PC-9 (cell line): ENCODE measurements at regions of chrX and their contacts with region 1.

Region 1: DNA sequence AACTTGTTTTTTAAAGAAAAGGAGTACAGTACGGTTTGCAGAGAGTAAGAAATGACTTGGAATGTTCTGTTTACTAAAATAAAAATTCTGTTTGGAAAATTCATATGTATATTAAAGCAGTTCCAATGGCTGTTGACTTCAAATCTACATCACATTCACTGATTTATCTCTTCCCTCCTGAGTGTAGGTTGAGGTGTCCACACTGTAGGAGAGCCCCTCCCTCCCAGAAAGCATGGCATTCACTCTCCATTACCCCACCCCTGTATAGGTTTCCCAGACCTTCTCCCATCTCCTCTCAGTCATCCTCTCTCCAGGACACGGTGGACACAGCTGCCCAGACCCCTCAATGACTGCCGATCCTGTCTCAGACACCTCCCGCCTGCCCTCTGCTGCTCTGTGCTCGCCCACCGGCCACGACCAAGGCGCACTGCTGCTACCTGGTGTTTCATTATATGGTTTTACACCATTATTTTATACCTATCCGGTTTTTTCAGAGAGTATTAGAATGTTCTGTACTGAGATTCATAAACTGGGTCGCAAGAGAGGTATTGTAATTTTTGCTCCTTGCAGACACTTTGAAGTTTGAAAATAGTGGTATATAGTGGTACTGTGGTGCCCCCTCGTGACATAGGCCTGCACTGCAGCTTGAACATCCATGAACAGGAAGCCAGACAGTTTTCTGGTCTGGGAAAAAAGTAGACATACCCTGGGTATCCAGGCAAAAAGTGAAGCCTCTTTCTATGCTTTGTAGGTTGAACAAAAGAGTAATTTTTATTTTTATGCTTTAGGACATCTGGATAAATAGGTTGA is 38.8 kb upstream of the BEX4 start:
- DNase-seq: peak in 1 of 2 experiments; percentile 50
- H3K4me3 ChIP-seq: no peak overlapping the region
- H3K27ac ChIP-seq: no peak overlapping the region
- H3K4me1 ChIP-seq: no peaks in the 10 kb centered on the region
- H3K27me3 ChIP-seq: no peaks in the 10 kb centered on the region
- CTCF ChIP-seq: peak; percentile 74

Region 2: DNA sequence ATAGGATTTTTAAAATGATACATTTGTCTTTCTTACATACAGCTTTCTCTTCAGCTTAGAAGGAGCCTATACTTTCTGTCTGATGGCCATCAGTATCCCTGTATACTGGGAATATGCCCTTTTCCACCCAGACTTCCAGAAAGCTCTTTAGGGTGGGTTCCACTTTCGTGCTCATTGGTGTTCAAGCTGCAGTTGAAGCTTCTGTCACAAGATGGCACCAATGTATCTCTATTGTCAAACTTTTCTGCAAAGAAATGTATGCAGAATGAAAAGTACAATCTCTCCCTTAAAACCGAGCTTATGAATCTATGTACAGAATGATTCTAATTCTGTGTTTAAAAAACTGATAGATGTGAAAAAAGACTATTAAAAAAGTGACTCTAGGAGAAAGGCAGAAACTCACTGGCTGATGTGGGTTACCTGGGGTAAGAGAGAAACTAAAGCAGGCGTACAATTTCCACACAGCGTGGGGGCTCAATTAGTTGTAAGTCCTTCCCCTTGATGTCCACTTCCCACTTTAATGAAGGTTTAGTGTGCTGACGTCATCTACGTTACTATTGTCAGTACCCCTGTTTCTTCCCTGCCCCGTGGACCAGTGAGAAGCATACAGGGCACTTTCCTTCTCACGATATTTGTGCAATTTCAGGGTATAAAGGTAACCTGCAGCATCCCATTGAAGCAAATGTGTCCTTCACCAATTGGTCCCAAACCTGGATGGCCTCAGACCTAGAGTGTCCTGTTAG is 1108.0 kb before region 1 on chrX:
- CTCF ChIA-PET with region 1: no interaction called
- POLR2A ChIA-PET with region 1: no interaction called
- intact Hi-C with region 1: loop called (anchors 5 kb)
- DNase-seq: peak in 1 of 2 experiments; percentile 1
- H3K4me3 ChIP-seq: no peak overlapping the region
- H3K27ac ChIP-seq: no peak overlapping the region
- H3K4me1 ChIP-seq: no peaks in the 10 kb centered on the region
- H3K27me3 ChIP-seq: no peaks in the 10 kb centered on the region
- CTCF ChIP-seq: peak; percentile 55; the same call in 1 of the 2 replicates

Region 3: DNA sequence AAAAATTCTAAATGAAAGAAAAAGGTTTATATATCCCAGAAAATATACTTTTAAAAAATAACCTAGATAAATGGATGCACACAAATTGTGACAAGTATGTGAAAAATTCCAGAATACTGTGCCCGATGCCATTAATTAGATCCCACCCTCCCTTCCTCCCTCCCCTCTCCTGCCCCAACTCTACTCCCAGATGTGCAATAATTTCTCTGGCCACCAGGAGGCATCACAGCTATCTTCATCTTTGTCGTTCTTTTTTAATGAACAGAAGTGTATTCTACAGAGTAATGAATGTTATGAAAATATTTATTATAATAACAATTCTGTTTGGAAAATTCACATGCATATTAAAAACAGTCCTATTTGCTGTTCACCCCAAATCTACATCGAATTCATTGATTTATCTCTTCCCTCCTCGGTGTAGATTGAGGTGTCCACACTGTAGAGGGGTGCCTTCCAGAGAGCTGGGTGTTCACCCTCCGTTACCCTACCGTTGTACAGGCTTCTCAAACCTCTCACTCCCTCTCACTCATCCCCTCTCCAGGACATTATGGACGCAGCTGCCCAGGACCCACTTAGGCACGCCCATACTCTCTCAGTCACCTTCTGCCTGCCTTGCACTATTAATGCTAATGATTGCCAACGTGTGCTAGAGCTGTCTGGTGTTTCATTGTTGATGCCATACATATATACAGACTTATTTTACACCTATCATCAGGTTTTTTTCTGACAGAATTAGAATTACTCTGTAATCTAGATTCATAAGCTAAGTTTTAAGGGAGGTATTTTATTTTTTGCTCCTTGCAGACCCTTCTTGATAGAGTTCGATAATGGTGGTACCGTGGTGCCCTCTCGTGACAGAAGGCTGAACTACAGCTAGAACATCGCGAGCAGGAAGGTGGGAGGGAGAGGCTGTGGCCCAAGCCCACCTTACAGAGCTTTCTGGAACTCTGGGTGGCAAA is 225.0 kb before region 1 on chrX:
- CTCF ChIA-PET with region 1: no interaction called
- POLR2A ChIA-PET with region 1: no interaction called
- intact Hi-C with region 1: loop called (anchors 5 kb)
- DNase-seq: peak in 1 of 2 experiments; percentile 33
- H3K4me3 ChIP-seq: no peak overlapping the region
- H3K27ac ChIP-seq: no peak overlapping the region
- H3K4me1 ChIP-seq: no peaks in the 10 kb centered on the region
- H3K27me3 ChIP-seq: no peaks in the 10 kb centered on the region
- CTCF ChIP-seq: peak; percentile 67